IMR-90 (cell line): ENCODE measurements at regions of chr14 and their contacts with region 1.

Region 1: DNA sequence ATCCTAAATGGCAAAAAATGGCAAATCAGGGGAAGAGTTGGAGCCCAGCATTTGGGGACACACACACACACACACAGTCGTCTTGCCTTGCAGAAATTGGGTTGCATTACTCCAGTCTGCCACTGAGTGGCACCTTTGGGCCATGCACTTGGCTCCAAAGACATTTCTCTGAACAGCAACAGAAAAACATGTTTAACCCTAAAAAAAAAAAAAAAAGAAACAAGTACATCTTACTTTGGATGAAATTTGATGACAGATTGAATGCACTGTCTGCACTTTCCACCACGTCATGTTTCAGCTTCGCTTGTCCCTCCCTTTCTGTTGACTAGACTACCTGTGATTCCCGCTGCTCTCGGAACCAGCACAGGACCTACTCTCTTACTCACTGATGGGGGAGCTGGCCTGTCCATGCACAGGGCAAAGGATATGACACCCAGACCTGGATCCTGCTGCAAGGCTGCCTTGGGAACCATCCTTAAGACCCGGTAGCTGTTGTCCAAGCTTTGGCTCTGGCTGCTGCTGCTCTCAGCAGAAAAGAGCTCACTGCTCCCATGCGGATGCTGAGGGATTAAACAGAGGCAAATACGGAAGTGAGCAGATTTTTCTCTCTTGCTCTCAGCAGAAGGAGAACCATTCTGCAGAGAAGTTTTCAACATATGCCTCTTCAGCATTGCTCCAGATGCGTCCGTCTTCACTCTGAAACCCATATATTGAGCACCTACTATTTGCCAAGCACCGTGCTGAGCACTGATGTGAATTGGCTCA is 376.8 kb downstream of the DPF3 start:
- DNase-seq: peak; percentile 91
- ATAC-seq: peak; percentile 88
- H3K4me3 ChIP-seq: no peak overlapping the region
- H3K27ac ChIP-seq: peak overlapping the region; percentile 35
- H3K4me1 ChIP-seq: peaks cover 7% of the 10 kb centered on the region
- H3K27me3 ChIP-seq: peaks cover 2% of the 10 kb centered on the region; the same call in 1 of the 2 replicates
- CTCF ChIP-seq: peak; percentile 98
- POLR2A ChIP-seq: peak; percentile 69
- RAD21 ChIP-seq: peak; percentile 99

Region 2: GRCh38 chr14:72350215-72350614 is 166.9 kb before region 1 on chr14:
- CTCF ChIA-PET with region 1: no interaction called
- POLR2A ChIA-PET with region 1: no interaction called
- dilution Hi-C with region 1: no loop called
- in situ Hi-C with region 1: no loop called
- intact Hi-C with region 1: no loop called
- DNase-seq: no peak
- ATAC-seq: no peak
- H3K4me3 ChIP-seq: no peak overlapping the region
- H3K27ac ChIP-seq: no peak overlapping the region
- H3K4me1 ChIP-seq: no peaks in the 10 kb centered on the region
- H3K27me3 ChIP-seq: no peaks in the 10 kb centered on the region
- CTCF ChIP-seq: no peak
- POLR2A ChIP-seq: no peak
- RAD21 ChIP-seq: no peak

Region 3: DNA sequence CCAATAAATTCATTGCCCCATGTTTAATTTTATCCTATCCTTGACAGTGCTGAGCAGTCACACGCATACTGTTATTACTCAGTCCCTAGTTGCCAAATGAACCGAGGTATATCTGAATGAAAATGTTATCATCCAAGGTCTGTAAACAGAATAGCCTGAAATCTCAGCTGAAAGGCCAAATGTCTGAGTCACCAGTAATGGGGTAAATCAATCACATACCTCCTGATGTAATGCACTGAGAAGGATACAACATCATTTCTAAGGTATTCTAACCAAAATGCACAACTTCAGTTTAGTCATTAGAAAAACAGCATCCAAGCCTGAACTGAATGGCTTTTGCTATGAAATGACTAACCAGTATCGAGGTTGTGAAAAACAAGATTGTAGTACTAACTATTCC is 148.1 kb after region 1 on chr14:
- CTCF ChIA-PET with region 1: interaction called, 5 read pairs
- POLR2A ChIA-PET with region 1: no interaction called
- dilution Hi-C with region 1: no loop called
- in situ Hi-C with region 1: no loop called
- intact Hi-C with region 1: loop called (anchors 5 kb)
- DNase-seq: peak; percentile 100
- ATAC-seq: peak; percentile 87
- H3K4me3 ChIP-seq: peak overlapping the region; percentile 33; the same call in 1 of the 2 replicates
- H3K27ac ChIP-seq: peak overlapping the region; percentile 82
- H3K4me1 ChIP-seq: peaks cover 23% of the 10 kb centered on the region
- H3K27me3 ChIP-seq: no peaks in the 10 kb centered on the region
- CTCF ChIP-seq: no peak
- POLR2A ChIP-seq: no peak
- RAD21 ChIP-seq: 0 out of 2 replicates have a peak, but pooled peaks have one; percentile 11

Region 4: DNA sequence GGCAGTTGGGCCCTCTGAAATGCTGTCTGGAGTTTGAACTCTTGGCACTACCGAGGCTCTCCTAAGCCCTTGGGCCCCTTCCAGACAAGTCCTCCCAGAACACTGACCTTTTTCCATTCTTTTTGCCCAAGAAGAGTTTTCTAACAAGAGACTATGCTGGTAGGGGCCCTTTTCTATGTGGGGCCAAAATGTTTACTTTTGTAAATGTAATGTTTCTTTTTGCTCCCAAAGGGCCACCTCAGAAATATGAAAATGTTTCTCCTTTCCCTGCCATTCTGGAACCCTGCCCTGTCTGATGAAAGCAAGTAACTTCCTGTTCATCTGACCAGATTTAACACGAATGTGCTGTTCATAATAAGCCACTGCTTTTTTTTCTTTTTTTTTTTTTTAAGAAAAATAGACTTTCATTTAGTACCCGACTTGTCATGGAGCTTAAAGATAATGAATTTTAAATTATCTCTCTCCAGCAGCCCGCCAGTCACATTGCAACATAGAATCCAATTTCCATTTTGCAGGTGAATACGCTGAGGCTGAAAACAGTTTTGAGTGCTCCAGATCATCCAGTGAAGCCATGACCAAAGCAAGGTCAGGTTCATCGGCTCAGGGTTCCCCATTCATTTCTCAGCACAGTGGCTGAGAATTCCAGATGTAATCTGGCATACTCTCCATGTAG is 206.9 kb after region 1 on chr14:
- CTCF ChIA-PET with region 1: no interaction called
- POLR2A ChIA-PET with region 1: no interaction called
- dilution Hi-C with region 1: no loop called
- in situ Hi-C with region 1: no loop called
- intact Hi-C with region 1: loop called (anchors 10 kb)
- DNase-seq: peak; percentile 44
- ATAC-seq: 0 out of 2 replicates have a peak, but pooled peaks have one; percentile 38
- H3K4me3 ChIP-seq: no peak overlapping the region
- H3K27ac ChIP-seq: peak overlapping the region; percentile 77; the same call in 1 of the 2 replicates
- H3K4me1 ChIP-seq: peaks cover 21% of the 10 kb centered on the region
- H3K27me3 ChIP-seq: no peaks in the 10 kb centered on the region
- CTCF ChIP-seq: no peak
- POLR2A ChIP-seq: no peak
- RAD21 ChIP-seq: no peak

Region 5: GRCh38 chr14:72745991-72746980 is 229.2 kb after region 1 on chr14:
- CTCF ChIA-PET with region 1: interaction called, 3 read pairs
- POLR2A ChIA-PET with region 1: no interaction called
- dilution Hi-C with region 1: no loop called
- in situ Hi-C with region 1: no loop called
- intact Hi-C with region 1: loop called (anchors 5 kb)
- DNase-seq: peak; percentile 84
- ATAC-seq: peak; percentile 74
- H3K4me3 ChIP-seq: no peak overlapping the region
- H3K27ac ChIP-seq: peak overlapping the region; percentile 78
- H3K4me1 ChIP-seq: peaks cover 26% of the 10 kb centered on the region
- H3K27me3 ChIP-seq: no peaks in the 10 kb centered on the region
- CTCF ChIP-seq: peak; percentile 40
- POLR2A ChIP-seq: no peak
- RAD21 ChIP-seq: peak; percentile 46

Region 6: GRCh38 chr14:72904840-72905561 is 387.9 kb after region 1 on chr14:
- CTCF ChIA-PET with region 1: interaction called, 60 read pairs
- POLR2A ChIA-PET with region 1: no interaction called
- dilution Hi-C with region 1: no loop called
- in situ Hi-C with region 1: loop called (anchors 5 kb)
- intact Hi-C with region 1: loop called (anchors 1 kb)
- DNase-seq: peak; percentile 81
- ATAC-seq: peak; percentile 66
- H3K4me3 ChIP-seq: no peak overlapping the region
- H3K27ac ChIP-seq: no peak overlapping the region
- H3K4me1 ChIP-seq: peaks cover 18% of the 10 kb centered on the region
- H3K27me3 ChIP-seq: no peaks in the 10 kb centered on the region
- CTCF ChIP-seq: peak; percentile 95
- POLR2A ChIP-seq: no peak
- RAD21 ChIP-seq: peak; percentile 95

Region 7: GRCh38 chr14:72948481-72949138 is 431.5 kb after region 1 on chr14:
- CTCF ChIA-PET with region 1: interaction called, 70 read pairs
- POLR2A ChIA-PET with region 1: interaction called, 3 read pairs
- dilution Hi-C with region 1: no loop called
- in situ Hi-C with region 1: loop called (anchors 5 kb)
- intact Hi-C with region 1: loop called (anchors 1 kb)
- DNase-seq: peak; percentile 70
- ATAC-seq: peak; percentile 86
- H3K4me3 ChIP-seq: no peak overlapping the region
- H3K27ac ChIP-seq: no peak overlapping the region
- H3K4me1 ChIP-seq: 0 out of 2 replicates have a peak, but pooled peaks cover 4% of the 10 kb centered on the region
- H3K27me3 ChIP-seq: no peaks in the 10 kb centered on the region
- CTCF ChIP-seq: peak; percentile 86
- POLR2A ChIP-seq: no peak
- RAD21 ChIP-seq: peak; percentile 80

Region 8: GRCh38 chr14:74249433-74250375 is 1732.6 kb after region 1 on chr14:
- CTCF ChIA-PET with region 1: no interaction called
- POLR2A ChIA-PET with region 1: no interaction called
- dilution Hi-C with region 1: no loop called
- in situ Hi-C with region 1: no loop called
- intact Hi-C with region 1: no loop called
- DNase-seq: no peak
- ATAC-seq: no peak
- H3K4me3 ChIP-seq: no peak overlapping the region
- H3K27ac ChIP-seq: no peak overlapping the region
- H3K4me1 ChIP-seq: no peaks in the 10 kb centered on the region
- H3K27me3 ChIP-seq: peaks cover 56% of the 10 kb centered on the region
- CTCF ChIP-seq: no peak
- POLR2A ChIP-seq: no peak
- RAD21 ChIP-seq: no peak